ENCODE measurements at regions of chr13 and their contacts with region 1.

Region 1: DNA sequence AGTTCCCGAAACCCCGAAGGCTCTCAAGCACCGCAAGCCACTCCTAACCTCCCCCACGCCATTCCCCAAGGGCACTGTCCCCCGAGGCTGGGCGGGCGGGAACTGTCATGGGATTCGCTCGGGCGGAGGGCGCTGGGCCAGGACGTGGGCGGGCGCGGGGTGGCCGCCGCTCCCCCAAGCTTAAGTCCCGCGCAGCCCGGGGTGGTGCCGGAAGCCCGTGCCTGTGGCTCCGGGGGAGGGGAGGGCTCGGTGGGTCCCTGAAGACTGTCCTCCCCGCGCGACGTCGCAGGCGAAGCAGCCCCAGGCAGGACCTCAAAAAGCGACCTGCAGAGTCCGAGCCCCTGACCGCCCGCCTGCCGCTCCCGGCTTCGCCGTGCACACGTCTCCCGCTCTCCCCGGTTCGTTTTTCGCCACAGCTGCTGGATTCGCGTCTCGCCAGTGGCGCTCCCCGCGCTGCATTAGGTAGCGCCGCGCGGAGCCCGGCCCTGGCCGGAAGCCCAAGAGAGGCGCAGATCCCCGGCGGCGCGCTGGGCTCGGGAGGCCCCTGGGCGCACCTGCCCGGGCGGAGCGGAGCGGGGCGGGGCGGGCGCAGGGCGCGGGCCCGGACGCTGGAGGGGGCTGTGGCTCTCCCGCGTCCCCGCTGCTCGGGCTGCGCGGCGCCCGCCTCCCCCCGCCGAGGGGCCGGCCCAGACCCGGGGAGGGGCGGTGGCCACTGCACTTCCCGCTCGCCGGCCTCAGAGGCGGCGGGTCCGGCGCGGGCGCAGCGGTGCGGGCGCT is at the start of gene FARP1:
- DNase-seq: peak; percentile 88 to 96
- H3K4me3 ChIP-seq: peak within 1 kb of the TSS; percentile 86
- H3K4me3 Mint-ChIP-seq: peak within 1 kb of the TSS; percentile 95
- H3K27ac Mint-ChIP-seq: peak within 1 kb of the TSS; percentile 91
- H3K4me1 ChIP-seq: peaks cover 42% of the 10 kb centered on the region
- H3K4me1 Mint-ChIP-seq: peaks cover 12% of the 10 kb centered on the region
- H3K27me3 ChIP-seq: no peaks in the 10 kb centered on the region
- H3K27me3 Mint-ChIP-seq: no peaks in the 10 kb centered on the region
- CTCF ChIP-seq: no peak
- total RNA-seq, gene FARP1: 189 and 208 TPM in 2 replicates

Region 2: DNA sequence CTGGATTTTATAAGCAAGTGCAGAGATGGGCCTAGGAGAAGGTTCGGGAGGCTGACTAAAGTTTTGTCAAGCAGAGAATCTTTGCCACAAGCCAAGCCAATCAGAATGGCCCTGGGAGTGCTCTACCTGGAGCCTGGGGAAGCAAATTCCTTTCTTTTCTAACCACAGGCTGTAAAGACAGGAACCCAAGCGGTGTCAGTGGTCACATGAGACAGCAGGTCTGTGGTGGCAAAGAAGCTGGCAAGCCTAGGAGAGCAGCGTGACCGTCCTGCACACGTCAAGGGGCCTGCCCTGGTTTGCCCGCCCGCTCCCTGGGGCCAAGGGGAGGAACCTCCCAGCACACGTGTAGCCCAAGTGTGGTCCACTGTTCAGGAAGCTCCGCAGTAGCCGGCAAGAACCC is 98.3 kb before region 1 on chr13:
- CTCF ChIA-PET with region 1: no interaction called
- POLR2A ChIA-PET with region 1: no interaction called
- intact Hi-C with region 1: no loop called
- DNase-seq: no peak
- H3K4me3 ChIP-seq: no peak overlapping the region
- H3K4me3 Mint-ChIP-seq: no peak overlapping the region
- H3K27ac Mint-ChIP-seq: no peak overlapping the region
- H3K4me1 ChIP-seq: no peaks in the 10 kb centered on the region
- H3K4me1 Mint-ChIP-seq: peaks cover 11% of the 10 kb centered on the region
- H3K27me3 ChIP-seq: no peaks in the 10 kb centered on the region
- H3K27me3 Mint-ChIP-seq: no peaks in the 10 kb centered on the region
- CTCF ChIP-seq: no peak

Region 3: DNA sequence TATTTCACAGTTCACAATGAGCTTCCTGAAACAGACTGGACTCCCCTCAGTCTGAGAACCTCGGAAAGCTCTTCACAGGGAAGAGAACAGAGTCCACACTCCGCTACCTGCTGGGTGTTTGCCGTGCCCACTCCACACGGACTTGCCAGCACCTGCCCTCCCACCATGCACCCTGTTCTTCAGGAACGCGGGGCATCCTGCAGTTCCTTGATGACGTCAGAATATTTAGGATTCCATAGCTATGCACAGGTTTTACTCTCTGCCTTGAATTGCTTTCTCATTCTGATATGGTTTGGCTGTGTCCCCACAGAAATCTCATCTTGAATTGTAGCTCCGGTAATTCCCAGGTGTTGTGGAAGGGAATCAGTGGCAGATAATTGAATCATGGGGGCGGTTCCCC is 74.0 kb before region 1 on chr13:
- CTCF ChIA-PET with region 1: interaction called, 3 read pairs
- POLR2A ChIA-PET with region 1: no interaction called
- intact Hi-C with region 1: loop called (anchors 2 kb)
- DNase-seq: peak; percentile 57 to 76
- H3K4me3 ChIP-seq: no peak overlapping the region
- H3K4me3 Mint-ChIP-seq: peak overlapping the region; percentile 65
- H3K27ac Mint-ChIP-seq: peak overlapping the region; percentile 76
- H3K4me1 ChIP-seq: peaks cover 8% of the 10 kb centered on the region; the same call in 1 of the 2 replicates
- H3K4me1 Mint-ChIP-seq: peaks cover 25% of the 10 kb centered on the region
- H3K27me3 ChIP-seq: no peaks in the 10 kb centered on the region
- H3K27me3 Mint-ChIP-seq: no peaks in the 10 kb centered on the region
- CTCF ChIP-seq: no peak

Region 4: GRCh38 chr13:98327371-98328270 is 185.1 kb after region 1 on chr13:
- CTCF ChIA-PET with region 1: no interaction called
- POLR2A ChIA-PET with region 1: no interaction called
- intact Hi-C with region 1: loop called (anchors 10 kb)
- DNase-seq: peak; percentile 73 to 78
- H3K4me3 ChIP-seq: no peak overlapping the region
- H3K4me3 Mint-ChIP-seq: peak overlapping the region; percentile 43
- H3K27ac Mint-ChIP-seq: peak overlapping the region; percentile 73
- H3K4me1 ChIP-seq: peaks cover 29% of the 10 kb centered on the region
- H3K4me1 Mint-ChIP-seq: peaks cover 29% of the 10 kb centered on the region
- H3K27me3 ChIP-seq: no peaks in the 10 kb centered on the region
- H3K27me3 Mint-ChIP-seq: no peaks in the 10 kb centered on the region
- CTCF ChIP-seq: no peak

Region 5: DNA sequence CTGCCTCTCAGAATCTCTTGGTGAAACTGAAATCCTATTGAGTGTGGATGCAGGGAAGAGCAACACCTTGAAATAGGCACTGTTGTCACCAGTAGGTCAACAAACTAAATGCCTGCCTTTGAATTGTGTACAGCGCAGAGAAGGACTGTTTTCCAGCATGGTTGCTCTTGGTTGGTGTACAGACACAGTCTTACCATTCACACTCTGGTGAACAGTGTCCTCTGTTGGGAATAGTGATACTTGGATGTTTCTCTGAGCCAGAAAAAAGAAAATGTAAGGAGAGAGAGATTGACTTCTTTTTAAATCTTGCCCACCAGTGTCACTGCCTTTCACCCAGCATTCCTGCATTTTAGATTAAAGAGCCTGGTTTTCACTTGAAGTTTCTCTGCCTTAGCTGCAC is 254.7 kb after region 1 on chr13:
- CTCF ChIA-PET with region 1: no interaction called
- POLR2A ChIA-PET with region 1: no interaction called
- intact Hi-C with region 1: loop called (anchors 1 kb)
- DNase-seq: no peak
- H3K4me3 ChIP-seq: no peak overlapping the region
- H3K4me3 Mint-ChIP-seq: no peak overlapping the region
- H3K27ac Mint-ChIP-seq: no peak overlapping the region
- H3K4me1 ChIP-seq: peaks cover 8% of the 10 kb centered on the region
- H3K4me1 Mint-ChIP-seq: no peaks in the 10 kb centered on the region
- H3K27me3 ChIP-seq: no peaks in the 10 kb centered on the region
- H3K27me3 Mint-ChIP-seq: no peaks in the 10 kb centered on the region
- CTCF ChIP-seq: peak in 1 of 2 experiments; percentile 47

Region 6: DNA sequence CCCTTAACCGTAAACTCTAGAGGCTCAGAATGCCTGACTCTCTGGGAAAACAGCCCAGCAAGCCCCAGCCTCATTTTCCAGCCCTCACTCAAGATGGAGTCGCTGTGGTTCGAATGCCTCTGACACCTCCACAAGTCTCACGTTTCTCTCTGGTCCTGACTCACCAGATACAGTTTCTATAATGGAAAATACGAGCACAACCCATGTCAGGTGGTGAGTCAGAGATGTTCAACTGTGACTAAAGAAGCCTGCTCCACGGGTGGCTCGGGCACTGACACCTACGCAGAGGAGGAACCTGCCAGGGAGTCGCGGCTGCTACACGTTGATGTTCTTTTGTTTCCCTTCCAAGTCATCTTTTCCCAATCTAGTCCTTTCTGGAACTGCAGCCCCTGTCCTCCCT is 521.5 kb after region 1 on chr13:
- CTCF ChIA-PET with region 1: no interaction called
- POLR2A ChIA-PET with region 1: no interaction called
- intact Hi-C with region 1: loop called (anchors 10 kb)
- DNase-seq: no peak
- H3K4me3 ChIP-seq: no peak overlapping the region
- H3K4me3 Mint-ChIP-seq: peak overlapping the region; percentile 38
- H3K27ac Mint-ChIP-seq: peak overlapping the region; percentile 54
- H3K4me1 ChIP-seq: peaks cover 45% of the 10 kb centered on the region
- H3K4me1 Mint-ChIP-seq: peaks cover 46% of the 10 kb centered on the region
- H3K27me3 ChIP-seq: no peaks in the 10 kb centered on the region
- H3K27me3 Mint-ChIP-seq: no peaks in the 10 kb centered on the region
- CTCF ChIP-seq: no peak